A673 (cell line): ENCODE measurements at regions of chr9 and their contacts with region 1.

Region 1: DNA sequence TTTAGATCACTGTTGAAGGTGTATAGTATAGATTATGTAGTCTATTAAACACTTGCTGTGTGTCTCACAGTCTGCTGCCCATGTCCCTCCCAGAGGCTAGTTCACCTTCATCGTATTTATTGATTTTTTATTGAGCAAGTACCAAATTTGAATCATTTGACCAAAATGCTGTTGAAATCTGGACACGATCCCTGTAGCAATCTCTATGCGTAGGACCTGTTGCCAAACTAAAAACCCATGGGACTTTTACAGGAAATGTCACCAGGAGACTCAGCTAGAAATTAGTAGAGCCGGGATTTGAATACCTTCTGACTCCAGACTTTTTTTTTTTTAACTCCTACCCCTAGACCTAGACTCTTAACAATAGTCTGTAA is 17.5 kb downstream of the SLC31A1 start:
- DNase-seq: peak; percentile 47
- H3K4me3 ChIP-seq: no peak overlapping the region
- H3K27ac ChIP-seq: no peak overlapping the region
- H3K4me1 ChIP-seq: peaks cover 22% of the 10 kb centered on the region
- H3K27me3 ChIP-seq: no peaks in the 10 kb centered on the region
- CTCF ChIP-seq: no peak

Region 2: GRCh38 chr9:113221003-113221799 is 17.6 kb before region 1 on chr9 and contains the starts of genes FKBP15 and SLC31A1:
- CTCF ChIA-PET with region 1: interaction called, 10 read pairs
- POLR2A ChIA-PET with region 1: no interaction called
- intact Hi-C with region 1: no loop called
- DNase-seq: peak; percentile 99
- H3K4me3 ChIP-seq: peak within 1 kb of the TSS; percentile 75
- H3K27ac ChIP-seq: peak within 1 kb of the TSS; percentile 75
- H3K4me1 ChIP-seq: peaks cover 18% of the 10 kb centered on the region
- H3K27me3 ChIP-seq: no peaks in the 10 kb centered on the region
- CTCF ChIP-seq: no peak
- total RNA-seq, gene FKBP15: 22.0 and 23.5 TPM in 2 replicates
- total RNA-seq, gene SLC31A1: 31.9 and 32.7 TPM in 2 replicates